Naive thymus-derived CD4-positive, alpha-beta T cell (primary cell): ENCODE measurements at regions of chr22 and their contacts with region 1.

Region 1: GRCh38 chr22:29553351-29554224 is at the start of gene THOC5:
- DNase-seq: peak; percentile 74 to 90 (median 88)
- ATAC-seq: peak; percentile 97
- H3K4me3 ChIP-seq: peak within 1 kb of the TSS; percentile 96
- H3K4me3 Mint-ChIP-seq: peak within 1 kb of the TSS; percentile 84 to 99 (median 94)
- H3K27ac ChIP-seq: peak within 1 kb of the TSS; percentile 84
- H3K27ac Mint-ChIP-seq: peak within 1 kb of the TSS; percentile 94 to 99 (median 98)
- H3K4me1 ChIP-seq: peaks cover 4 to 7% of the 10 kb centered on the region in 2 donors
- H3K4me1 Mint-ChIP-seq: peaks cover 12 to 36% (median 29%) of the 10 kb centered on the region in 7 donors
- H3K27me3 ChIP-seq: no peaks in the 10 kb centered on the region
- H3K27me3 Mint-ChIP-seq: no peaks in the 10 kb centered on the region
- total RNA-seq, gene THOC5: 45.7 to 61.9 (median 57.1) TPM

Region 2: DNA sequence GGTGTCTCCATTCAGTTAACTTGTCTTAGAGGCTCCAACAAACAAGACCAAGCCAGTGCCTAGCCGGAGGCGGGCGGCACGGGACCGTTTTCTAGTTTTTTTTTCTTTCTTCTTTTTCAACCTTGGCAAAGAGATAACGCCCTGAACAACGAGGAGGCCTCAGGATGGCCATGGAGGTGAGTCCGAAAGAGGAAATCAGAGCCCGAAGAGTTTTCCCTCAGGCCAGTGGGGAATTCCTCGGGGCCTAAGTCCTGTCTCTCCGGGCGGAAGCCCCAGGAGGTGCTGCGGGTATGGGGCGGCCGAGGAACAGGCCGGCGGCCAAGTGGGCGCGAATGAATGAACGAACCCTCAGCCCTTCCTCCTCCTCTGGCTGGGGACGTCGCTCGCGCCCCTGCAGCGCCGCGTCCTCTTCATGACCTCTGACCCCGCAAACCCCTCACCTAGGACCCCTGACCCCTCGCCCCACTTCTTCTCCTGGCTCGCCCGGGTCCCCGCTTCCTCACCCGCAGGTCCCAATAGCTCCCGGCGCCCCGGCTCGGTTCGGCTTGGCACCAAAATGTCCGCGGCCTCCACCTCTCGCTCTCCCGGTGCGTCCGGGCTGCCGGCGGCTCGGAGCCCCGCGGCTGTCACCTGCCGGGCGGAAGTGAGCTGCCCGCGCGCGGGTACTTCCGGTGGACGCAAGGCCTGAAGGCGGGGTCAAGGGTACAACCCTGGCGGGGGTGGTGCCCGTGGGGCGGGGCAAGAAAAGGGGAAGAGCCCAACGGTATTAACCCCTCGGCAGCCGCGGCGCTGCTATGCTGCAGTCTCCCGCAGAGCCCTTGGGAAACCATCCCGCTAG is 165.4 kb before region 1 on chr22 and contains the start of gene AP1B1:
- CTCF ChIA-PET with region 1: no interaction called
- POLR2A ChIA-PET with region 1: interaction called, 4 read pairs
- intact Hi-C with region 1: loop called (anchors 1 kb)
- DNase-seq: peak; percentile 79 to 96 (median 86)
- ATAC-seq: peak; percentile 98
- H3K4me3 ChIP-seq: peak within 1 kb of the TSS; percentile 87
- H3K4me3 Mint-ChIP-seq: peak within 1 kb of the TSS; percentile 91 to 96 (median 94)
- H3K27ac ChIP-seq: peak within 1 kb of the TSS; percentile 73
- H3K27ac Mint-ChIP-seq: peak within 1 kb of the TSS; percentile 87 to 97 (median 90)
- H3K4me1 ChIP-seq: peaks cover 7 to 13% of the 10 kb centered on the region in 2 donors
- H3K4me1 Mint-ChIP-seq: peaks cover 31 to 51% (median 48%) of the 10 kb centered on the region in 7 donors
- H3K27me3 ChIP-seq: no peaks in the 10 kb centered on the region
- H3K27me3 Mint-ChIP-seq: no peaks in the 10 kb centered on the region
- total RNA-seq, gene AP1B1: 38.5 to 77.7 (median 45.8) TPM

Region 3: DNA sequence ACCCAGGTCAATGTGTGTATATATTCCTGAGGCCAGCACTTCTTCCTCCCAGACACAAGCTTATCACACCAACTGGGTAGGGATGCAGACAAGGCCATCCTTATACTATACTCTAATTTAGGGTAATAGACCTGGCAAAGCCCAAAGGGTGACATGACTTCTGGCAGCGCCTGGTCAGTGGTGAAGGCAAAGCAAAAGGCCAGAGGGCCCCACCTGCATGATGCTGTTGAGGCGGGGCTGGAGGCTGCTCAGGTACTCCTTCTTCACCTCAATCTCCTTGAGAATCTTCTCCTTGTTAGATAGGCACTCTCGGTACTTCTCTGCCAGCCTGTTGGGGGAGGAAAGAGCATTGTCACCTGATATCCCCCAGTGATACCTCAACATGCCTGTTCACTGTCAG is 17.2 kb before region 1 on chr22:
- CTCF ChIA-PET with region 1: no interaction called
- POLR2A ChIA-PET with region 1: no interaction called
- intact Hi-C with region 1: no loop called
- DNase-seq: no peak
- ATAC-seq: no peak
- H3K4me3 ChIP-seq: no peak overlapping the region
- H3K4me3 Mint-ChIP-seq: no peak overlapping the region
- H3K27ac ChIP-seq: no peak overlapping the region
- H3K27ac Mint-ChIP-seq: peak overlapping the region in 2 of 9 donors; percentile 38 to 55
- H3K4me1 ChIP-seq: no peaks in the 10 kb centered on the region
- H3K4me1 Mint-ChIP-seq: peaks cover 0 to 10% (median 0%) of the 10 kb centered on the region in 7 donors
- H3K27me3 ChIP-seq: no peaks in the 10 kb centered on the region
- H3K27me3 Mint-ChIP-seq: no peaks in the 10 kb centered on the region

Region 4: DNA sequence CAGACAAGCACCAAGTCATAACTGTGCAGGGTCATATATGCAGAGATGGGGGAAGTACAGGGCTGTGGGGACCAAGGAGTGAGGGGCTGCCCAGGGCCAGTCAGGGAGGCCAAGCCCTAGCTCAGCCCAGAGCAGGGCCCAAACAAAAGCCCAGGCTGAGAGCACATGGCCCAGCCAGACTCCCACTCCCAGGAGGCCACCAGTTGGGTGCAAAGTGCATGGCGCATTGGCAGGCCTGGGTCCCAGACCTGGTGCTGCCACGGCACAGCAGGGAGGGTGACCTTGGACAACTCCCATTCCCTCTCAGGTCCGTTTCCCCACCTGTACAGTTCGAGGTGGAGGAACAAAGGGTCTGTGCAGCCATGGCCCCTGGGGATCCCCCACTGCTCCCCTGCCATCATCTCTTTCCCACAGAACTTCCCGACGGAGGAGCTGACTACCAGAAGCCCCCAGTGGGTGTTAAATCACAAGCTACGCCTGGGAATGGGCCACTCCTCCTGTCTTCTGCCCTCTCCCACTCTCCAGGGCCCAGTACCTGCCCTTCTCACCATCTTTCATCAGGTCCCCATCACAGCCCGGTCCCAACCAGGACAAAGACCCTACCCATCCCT is 26.7 kb after region 1 on chr22:
- CTCF ChIA-PET with region 1: no interaction called
- POLR2A ChIA-PET with region 1: interaction called, 15 read pairs
- intact Hi-C with region 1: loop called (anchors 1 kb)
- DNase-seq: peak in 1 of 9 donors; percentile 26
- ATAC-seq: no peak
- H3K4me3 ChIP-seq: peak overlapping the region; percentile 75
- H3K4me3 Mint-ChIP-seq: peak overlapping the region; percentile 88 to 96 (median 93)
- H3K27ac ChIP-seq: peak overlapping the region; percentile 69
- H3K27ac Mint-ChIP-seq: peak overlapping the region; percentile 78 to 95 (median 91)
- H3K4me1 ChIP-seq: peaks cover 0 to 10% of the 10 kb centered on the region in 2 donors
- H3K4me1 Mint-ChIP-seq: peaks cover 11 to 20% (median 16%) of the 10 kb centered on the region in 7 donors
- H3K27me3 ChIP-seq: no peaks in the 10 kb centered on the region
- H3K27me3 Mint-ChIP-seq: no peaks in the 10 kb centered on the region

Region 5: DNA sequence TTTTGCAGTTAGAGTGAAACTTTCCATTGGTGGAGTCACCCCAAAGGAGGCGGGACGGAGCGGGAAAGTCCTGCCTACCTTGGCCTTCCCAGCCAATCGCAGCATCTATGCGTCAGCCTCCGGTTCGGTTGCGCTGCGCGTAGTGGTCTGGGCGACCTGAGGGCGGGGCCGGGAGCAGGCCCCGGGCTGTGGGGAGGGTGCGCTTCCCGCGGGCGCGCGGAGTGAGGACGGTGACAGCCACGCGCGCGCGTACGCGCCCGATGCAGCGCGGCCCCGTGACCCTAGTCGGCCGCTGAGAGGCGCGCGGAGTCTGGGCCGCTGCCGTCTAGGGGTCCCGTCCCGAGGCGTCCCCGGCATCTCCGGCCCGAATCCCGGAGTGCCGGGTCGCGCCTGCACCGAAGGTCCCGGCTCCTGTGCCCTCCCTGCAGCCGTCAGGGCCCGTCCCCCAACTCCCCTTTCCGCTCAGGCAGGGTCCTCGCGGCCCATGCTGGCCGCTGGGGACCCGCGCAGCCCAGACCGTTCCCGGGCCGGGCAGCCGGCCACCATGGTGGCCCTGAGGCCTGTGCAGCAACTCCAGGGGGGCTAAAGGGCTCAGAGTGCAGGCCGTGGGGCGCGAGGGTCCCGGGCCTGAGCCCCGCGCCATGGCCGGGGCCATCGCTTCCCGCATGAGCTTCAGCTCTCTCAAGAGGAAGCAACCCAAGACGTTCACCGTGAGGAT is 49.9 kb after region 1 on chr22 and contains the start of gene NF2:
- CTCF ChIA-PET with region 1: no interaction called
- POLR2A ChIA-PET with region 1: interaction called, 12 read pairs
- intact Hi-C with region 1: loop called (anchors 1 kb)
- DNase-seq: peak; percentile 96 to 99 (median 98)
- ATAC-seq: peak; percentile 98
- H3K4me3 ChIP-seq: peak within 1 kb of the TSS; percentile 92
- H3K4me3 Mint-ChIP-seq: peak within 1 kb of the TSS; percentile 85 to 98 (median 96)
- H3K27ac ChIP-seq: peak within 1 kb of the TSS; percentile 91
- H3K27ac Mint-ChIP-seq: peak within 1 kb of the TSS; percentile 91 to 99 (median 98)
- H3K4me1 ChIP-seq: peaks cover 11 to 16% of the 10 kb centered on the region in 2 donors
- H3K4me1 Mint-ChIP-seq: peaks cover 13 to 40% (median 28%) of the 10 kb centered on the region in 7 donors
- H3K27me3 ChIP-seq: no peaks in the 10 kb centered on the region
- H3K27me3 Mint-ChIP-seq: no peaks in the 10 kb centered on the region
- total RNA-seq, gene NF2: 27.6 to 56.3 (median 28.3) TPM

Region 6: GRCh38 chr22:29837780-29838598 is 284.4 kb after region 1 on chr22 and contains the start of gene ASCC2:
- CTCF ChIA-PET with region 1: no interaction called
- POLR2A ChIA-PET with region 1: interaction called, 7 read pairs
- intact Hi-C with region 1: loop called in 1 of 2 experiments (anchors 1 kb)
- DNase-seq: peak; percentile 93 to 98 (median 97)
- ATAC-seq: peak; percentile 100
- H3K4me3 ChIP-seq: peak within 1 kb of the TSS; percentile 98
- H3K4me3 Mint-ChIP-seq: peak within 1 kb of the TSS; percentile 89 to 99 (median 95)
- H3K27ac ChIP-seq: peak within 1 kb of the TSS; percentile 79
- H3K27ac Mint-ChIP-seq: peak within 1 kb of the TSS; percentile 94 to 99 (median 95)
- H3K4me1 ChIP-seq: peaks cover 12 to 22% of the 10 kb centered on the region in 2 donors
- H3K4me1 Mint-ChIP-seq: peaks cover 31 to 55% (median 45%) of the 10 kb centered on the region in 7 donors
- H3K27me3 ChIP-seq: no peaks in the 10 kb centered on the region
- H3K27me3 Mint-ChIP-seq: no peaks in the 10 kb centered on the region
- total RNA-seq, gene ASCC2: 90.2 to 101 (median 93.8) TPM